ENCODE measurements at regions of chr2 and their contacts with region 1.

Region 1: GRCh38 chr2:186496401-186496800 is 10.3 kb downstream of the ZC3H15 start:
- DNase-seq: no peak
- H3K4me3 Mint-ChIP-seq: no peak overlapping the region
- H3K27ac Mint-ChIP-seq: no peak overlapping the region
- H3K4me1 Mint-ChIP-seq: peaks cover 25% of the 10 kb centered on the region
- H3K27me3 Mint-ChIP-seq: no peaks in the 10 kb centered on the region
- CTCF ChIP-seq: no peak

Region 2: DNA sequence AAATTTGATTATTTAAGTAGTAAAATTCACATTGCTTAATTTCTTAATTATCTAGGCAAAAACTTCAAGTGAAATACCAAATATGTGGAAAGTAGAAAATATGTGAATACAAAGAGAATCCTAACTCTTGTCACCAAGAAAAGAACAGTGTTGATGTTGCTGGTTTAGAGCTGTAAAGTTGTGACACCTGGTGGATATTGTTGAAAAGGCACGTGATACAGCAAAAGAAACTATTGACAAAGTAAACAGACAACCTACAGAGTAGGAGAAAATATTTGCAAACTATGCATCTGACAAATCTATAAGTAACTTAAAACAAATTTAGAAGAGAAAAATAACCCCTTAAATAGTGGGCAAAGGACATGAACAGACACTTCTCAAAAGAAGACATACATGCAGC is 35.9 kb before region 1 on chr2:
- CTCF ChIA-PET with region 1: no interaction called
- POLR2A ChIA-PET with region 1: no interaction called
- intact Hi-C with region 1: no loop called
- DNase-seq: peak; percentile 35
- H3K4me3 Mint-ChIP-seq: no peak overlapping the region
- H3K27ac Mint-ChIP-seq: no peak overlapping the region
- H3K4me1 Mint-ChIP-seq: no peaks in the 10 kb centered on the region
- H3K27me3 Mint-ChIP-seq: no peaks in the 10 kb centered on the region
- CTCF ChIP-seq: peak; percentile 39

Region 3: GRCh38 chr2:186485871-186486650 is 10.3 kb before region 1 on chr2 and contains the start of gene ZC3H15:
- CTCF ChIA-PET with region 1: no interaction called
- POLR2A ChIA-PET with region 1: interaction called, 14 read pairs
- intact Hi-C with region 1: no loop called
- DNase-seq: peak; percentile 97
- H3K4me3 Mint-ChIP-seq: peak within 1 kb of the TSS; percentile 90
- H3K27ac Mint-ChIP-seq: peak within 1 kb of the TSS; percentile 91
- H3K4me1 Mint-ChIP-seq: peaks cover 47% of the 10 kb centered on the region
- H3K27me3 Mint-ChIP-seq: no peaks in the 10 kb centered on the region
- CTCF ChIP-seq: no peak
- total RNA-seq, gene ZC3H15: 75.8 and 98.8 TPM in 2 replicates

Region 4: GRCh38 chr2:186950694-186951093 is 454.3 kb after region 1 on chr2:
- CTCF ChIA-PET with region 1: no interaction called
- POLR2A ChIA-PET with region 1: no interaction called
- intact Hi-C with region 1: no loop called
- DNase-seq: peak; percentile 23
- H3K4me3 Mint-ChIP-seq: no peak overlapping the region
- H3K27ac Mint-ChIP-seq: no peak overlapping the region
- H3K4me1 Mint-ChIP-seq: peaks cover 5% of the 10 kb centered on the region
- H3K27me3 Mint-ChIP-seq: no peaks in the 10 kb centered on the region
- CTCF ChIP-seq: no peak